ENCODE measurements at regions of chr18 and their contacts with region 1.

Region 1: DNA sequence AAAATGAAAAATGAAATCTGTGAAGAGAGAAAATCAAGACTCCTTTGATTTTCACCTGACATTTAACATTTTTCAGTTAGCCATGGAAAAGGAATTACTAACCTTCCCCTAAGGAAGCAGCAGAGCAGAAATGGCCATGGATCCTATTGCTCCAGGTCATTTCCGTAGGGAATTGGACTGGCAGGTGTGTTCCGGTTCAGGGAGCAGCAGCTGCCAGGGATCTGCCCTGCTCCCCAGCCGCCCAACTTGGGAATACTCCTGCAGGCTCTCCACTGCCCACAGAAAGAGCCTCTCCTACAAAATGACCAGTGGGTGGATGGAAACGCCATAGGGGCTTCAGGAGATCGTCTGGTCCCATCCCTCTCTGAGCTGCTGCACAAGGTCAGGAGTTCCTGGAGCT is 86.0 kb upstream of the MAPK4 start:
- DNase-seq: no peak
- H3K4me3 ChIP-seq: no peak overlapping the region
- CTCF ChIP-seq: no peak
- POLR2A ChIP-seq: no peak

Region 2: GRCh38 chr18:49459404-49460171 is 1014.3 kb before region 1 on chr18:
- intact Hi-C with region 1: no loop called
- DNase-seq: peak in 1 of 2 donors; percentile 27
- H3K4me3 ChIP-seq: peak overlapping the region; percentile 82
- CTCF ChIP-seq: no peak
- POLR2A ChIP-seq: no peak

Region 3: GRCh38 chr18:50457639-50458038 is 16.2 kb before region 1 on chr18:
- intact Hi-C with region 1: loop called (anchors 1 kb)
- DNase-seq: no peak
- H3K4me3 ChIP-seq: no peak overlapping the region
- CTCF ChIP-seq: no peak
- POLR2A ChIP-seq: no peak